Activated T-helper 2 cell treated with anti-CD3 and anti-CD28 coated beads, Interferon-gamma antibody, Interleukin-2, Interleukin-4, amounts not matched to agents 10 μg/mL and 5 μg/mL and 100 μg/mL, durations not matched to agents 14 hours and 24 hours and 36 hours (primary cell): ENCODE measurements at regions of chr18 and their contacts with region 1.

Region 1: DNA sequence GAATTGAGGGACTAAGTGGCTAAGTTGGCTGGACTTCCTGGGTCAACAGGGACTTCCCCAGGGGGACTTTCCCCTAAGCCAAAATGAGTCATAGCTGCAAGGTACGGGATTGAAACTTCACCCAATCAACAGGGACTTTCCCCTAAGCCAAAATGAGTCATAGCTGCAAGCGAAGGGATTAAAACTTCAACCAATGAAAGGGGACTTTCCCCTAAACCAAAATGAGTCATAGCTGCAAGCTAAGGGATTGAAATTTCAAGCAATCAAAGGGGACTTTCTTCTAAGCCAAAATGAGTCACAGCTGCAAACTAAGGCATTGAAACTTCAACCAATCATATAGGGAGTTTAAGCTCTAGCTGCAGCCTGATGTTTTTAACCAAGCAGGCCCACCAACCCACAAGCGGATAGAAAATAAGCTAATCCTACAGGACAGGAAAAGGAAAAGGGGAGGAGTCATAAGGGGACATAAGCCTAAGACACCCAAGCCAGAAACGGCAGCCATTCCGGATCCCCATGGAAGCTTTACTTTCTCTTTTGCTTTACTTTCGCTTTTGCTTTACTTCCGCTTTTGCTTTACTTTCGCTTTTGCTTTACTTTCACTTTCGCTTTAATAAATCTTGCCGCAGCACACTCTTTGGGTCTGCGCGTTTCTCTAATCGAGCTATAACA is 1375.4 kb upstream of the CELF4 start:
- DNase-seq: peak; percentile 54
- H3K4me3 Mint-ChIP-seq: peak overlapping the region; percentile 26
- H3K27ac Mint-ChIP-seq: peak overlapping the region; percentile 81
- H3K4me1 Mint-ChIP-seq: peaks cover 27% of the 10 kb centered on the region
- H3K27me3 Mint-ChIP-seq: no peaks in the 10 kb centered on the region

Region 2: DNA sequence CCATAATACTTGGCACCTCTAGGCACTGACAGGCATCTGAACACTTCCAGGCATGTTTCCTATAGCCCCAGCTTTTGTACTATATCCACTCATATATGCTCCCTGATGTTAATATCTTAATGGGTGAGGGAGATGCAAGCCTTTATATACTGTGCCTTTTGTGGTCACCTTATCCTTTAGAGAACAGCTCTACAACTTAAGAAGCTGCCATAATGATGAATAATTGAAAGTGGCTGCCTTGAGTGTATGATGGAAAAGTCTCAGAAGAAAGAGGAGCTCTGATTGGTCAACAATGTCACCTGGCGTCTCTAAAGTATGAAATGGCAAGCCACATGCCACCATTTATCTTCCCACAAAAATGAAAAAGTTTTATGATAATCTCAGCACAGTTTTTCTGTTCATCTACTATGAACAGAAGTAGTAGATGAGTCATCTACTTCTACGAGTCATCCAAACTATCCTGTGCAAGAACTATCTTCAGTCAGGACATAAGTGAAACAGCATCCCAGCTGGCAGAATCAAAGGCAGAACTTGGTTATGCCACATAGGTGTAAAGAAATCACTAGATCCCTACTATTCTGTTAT is 377.5 kb before region 1 on chr18:
- intact Hi-C with region 1: loop called (anchors 5 kb)
- DNase-seq: no peak
- H3K4me3 Mint-ChIP-seq: no peak overlapping the region
- H3K27ac Mint-ChIP-seq: no peak overlapping the region
- H3K4me1 Mint-ChIP-seq: peaks cover 2% of the 10 kb centered on the region
- H3K27me3 Mint-ChIP-seq: no peaks in the 10 kb centered on the region

Region 3: GRCh38 chr18:38575648-38576047 is 365.3 kb before region 1 on chr18:
- intact Hi-C with region 1: loop called (anchors 1 kb)
- DNase-seq: no peak
- H3K4me3 Mint-ChIP-seq: peak overlapping the region; percentile 24
- H3K27ac Mint-ChIP-seq: peak overlapping the region; percentile 31
- H3K4me1 Mint-ChIP-seq: peaks cover 24% of the 10 kb centered on the region
- H3K27me3 Mint-ChIP-seq: no peaks in the 10 kb centered on the region

Region 4: GRCh38 chr18:39134255-39134654 is 193.3 kb after region 1 on chr18:
- intact Hi-C with region 1: no loop called
- DNase-seq: no peak
- H3K4me3 Mint-ChIP-seq: no peak overlapping the region
- H3K27ac Mint-ChIP-seq: no peak overlapping the region
- H3K4me1 Mint-ChIP-seq: no peaks in the 10 kb centered on the region
- H3K27me3 Mint-ChIP-seq: no peaks in the 10 kb centered on the region

Region 5: GRCh38 chr18:39414009-39414700 is 473.2 kb after region 1 on chr18:
- intact Hi-C with region 1: loop called (anchors 2 kb)
- DNase-seq: no peak
- H3K4me3 Mint-ChIP-seq: peak overlapping the region; percentile 23
- H3K27ac Mint-ChIP-seq: no peak overlapping the region
- H3K4me1 Mint-ChIP-seq: peaks cover 7% of the 10 kb centered on the region
- H3K27me3 Mint-ChIP-seq: no peaks in the 10 kb centered on the region

Region 6: GRCh38 chr18:39494211-39494896 is 553.4 kb after region 1 on chr18:
- intact Hi-C with region 1: loop called (anchors 5 kb)
- DNase-seq: no peak
- H3K4me3 Mint-ChIP-seq: no peak overlapping the region
- H3K27ac Mint-ChIP-seq: no peak overlapping the region
- H3K4me1 Mint-ChIP-seq: peaks cover 2% of the 10 kb centered on the region
- H3K27me3 Mint-ChIP-seq: no peaks in the 10 kb centered on the region